ENCODE measurements at regions of chr1 and their contacts with region 1.

Region 1: GRCh38 chr1:66452162-66452561 is 81.8 kb upstream of the SGIP1 start:
- DNase-seq: no peak
- H3K4me3 ChIP-seq: no peak overlapping the region
- H3K27ac ChIP-seq: no peak overlapping the region
- H3K4me1 ChIP-seq: no peaks in the 10 kb centered on the region
- H3K27me3 ChIP-seq: no peaks in the 10 kb centered on the region
- CTCF ChIP-seq: no peak
- EP300 ChIP-seq: no peak
- POLR2A ChIP-seq: no peak
- RAD21 ChIP-seq: peak; percentile 2 to 15; a peak in 2 of 4 replicates

Region 2: DNA sequence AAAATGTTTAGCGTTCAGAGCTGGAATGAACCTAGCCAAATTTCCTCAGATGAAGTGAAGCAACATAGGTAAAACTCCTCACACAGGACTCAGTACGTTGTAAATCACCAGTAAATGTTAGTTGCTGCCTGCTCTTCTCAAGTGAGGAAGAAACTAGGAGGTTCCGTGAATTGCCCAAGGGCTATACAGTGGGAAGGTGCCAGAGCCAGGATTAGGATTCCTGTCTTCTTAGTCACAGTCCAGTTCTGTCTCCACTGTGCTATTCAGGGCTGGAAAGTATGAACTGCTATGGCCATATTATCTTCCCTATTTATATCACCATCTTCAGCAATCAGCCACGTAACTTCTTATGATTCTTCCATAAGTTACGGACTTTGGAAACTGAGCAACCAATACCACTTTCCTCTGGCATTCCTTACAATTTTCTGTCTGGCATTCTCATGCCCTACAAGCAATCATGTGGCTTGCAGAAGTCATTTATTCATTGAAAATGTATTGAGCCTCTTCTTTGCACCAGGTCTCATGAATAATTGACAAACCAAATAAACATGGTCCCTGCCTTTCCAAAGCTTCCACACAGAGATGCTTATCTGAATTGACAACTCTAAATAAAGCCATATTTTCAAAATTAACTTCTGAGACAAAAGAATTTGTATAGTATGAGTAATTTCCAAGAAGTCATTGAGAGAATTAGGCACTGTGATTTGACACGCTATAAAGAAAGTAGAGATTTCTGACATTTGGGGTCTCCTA is 189.8 kb before region 1 on chr1:
- CTCF ChIA-PET with region 1: interaction called, 273 read pairs
- POLR2A ChIA-PET with region 1: no interaction called
- DNase-seq: no peak
- H3K4me3 ChIP-seq: no peak overlapping the region
- H3K27ac ChIP-seq: no peak overlapping the region
- H3K4me1 ChIP-seq: peaks cover 0 to 3% (median under 1%) of the 10 kb centered on the region in 4 experiments; a peak in 2 of 7 replicates
- H3K27me3 ChIP-seq: no peaks in the 10 kb centered on the region
- CTCF ChIP-seq: no peak
- EP300 ChIP-seq: no peak
- POLR2A ChIP-seq: no peak
- RAD21 ChIP-seq: no peak

Region 3: GRCh38 chr1:66285618-66286270 is 166.4 kb before region 1 on chr1:
- CTCF ChIA-PET with region 1: no interaction called
- POLR2A ChIA-PET with region 1: no interaction called
- DNase-seq: no peak
- H3K4me3 ChIP-seq: no peak overlapping the region
- H3K27ac ChIP-seq: no peak overlapping the region
- H3K4me1 ChIP-seq: no peaks in the 10 kb centered on the region
- H3K27me3 ChIP-seq: no peaks in the 10 kb centered on the region
- CTCF ChIP-seq: no peak
- EP300 ChIP-seq: no peak
- POLR2A ChIP-seq: no peak
- RAD21 ChIP-seq: no peak

Region 4: DNA sequence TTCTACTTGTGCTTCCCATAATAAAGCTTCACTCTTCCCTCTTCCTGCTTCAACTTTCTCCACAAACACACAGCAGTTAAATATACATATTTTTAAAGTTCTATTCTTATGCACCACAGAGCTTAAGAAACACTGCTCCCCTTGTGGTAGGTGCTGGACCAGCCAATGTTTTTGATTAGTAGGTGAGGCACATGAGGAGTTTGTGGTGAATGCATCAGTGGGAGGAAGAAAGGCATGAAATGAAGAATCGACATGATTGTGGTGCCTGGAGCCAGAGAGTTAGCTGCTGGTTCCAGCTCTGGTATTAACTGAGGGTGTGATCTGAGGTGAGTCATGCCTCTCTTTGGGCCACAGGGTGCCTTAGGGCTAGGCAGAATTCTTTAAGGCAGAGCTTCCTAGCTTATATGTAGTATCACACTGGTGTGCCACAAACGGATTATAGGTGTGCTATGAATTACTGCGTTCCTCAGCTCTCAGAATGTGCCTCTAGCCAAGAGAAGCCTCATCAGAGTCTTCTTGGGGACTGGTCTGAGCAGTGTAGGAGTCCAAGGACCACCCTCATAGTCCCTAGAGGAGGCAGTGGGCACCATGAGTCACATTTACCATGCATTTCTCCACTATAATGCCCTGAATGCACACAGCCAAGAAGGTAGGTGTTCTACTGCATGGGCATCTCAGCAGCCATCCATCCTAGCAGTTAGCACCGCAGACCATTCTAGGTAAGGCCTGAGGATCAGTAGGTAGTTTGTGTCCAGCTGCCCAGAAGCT is 15.6 kb before region 1 on chr1:
- CTCF ChIA-PET with region 1: interaction called, 78 read pairs
- POLR2A ChIA-PET with region 1: no interaction called
- DNase-seq: no peak
- H3K4me3 ChIP-seq: no peak overlapping the region
- H3K27ac ChIP-seq: no peak overlapping the region; the same call in 1 of the 2 replicates
- H3K4me1 ChIP-seq: peaks cover 0 to 2% (median 0%) of the 10 kb centered on the region in 4 experiments; a peak in 1 of 7 replicates
- H3K27me3 ChIP-seq: no peaks in the 10 kb centered on the region
- CTCF ChIP-seq: peak in 2 of 3 experiments; percentile 2 to 44; a peak in 1 of 4 replicates
- EP300 ChIP-seq: no peak
- POLR2A ChIP-seq: no peak
- RAD21 ChIP-seq: 0 out of 4 replicates have a peak, but pooled peaks of 1 of the 2 experiments have one; percentile 16

Region 5: DNA sequence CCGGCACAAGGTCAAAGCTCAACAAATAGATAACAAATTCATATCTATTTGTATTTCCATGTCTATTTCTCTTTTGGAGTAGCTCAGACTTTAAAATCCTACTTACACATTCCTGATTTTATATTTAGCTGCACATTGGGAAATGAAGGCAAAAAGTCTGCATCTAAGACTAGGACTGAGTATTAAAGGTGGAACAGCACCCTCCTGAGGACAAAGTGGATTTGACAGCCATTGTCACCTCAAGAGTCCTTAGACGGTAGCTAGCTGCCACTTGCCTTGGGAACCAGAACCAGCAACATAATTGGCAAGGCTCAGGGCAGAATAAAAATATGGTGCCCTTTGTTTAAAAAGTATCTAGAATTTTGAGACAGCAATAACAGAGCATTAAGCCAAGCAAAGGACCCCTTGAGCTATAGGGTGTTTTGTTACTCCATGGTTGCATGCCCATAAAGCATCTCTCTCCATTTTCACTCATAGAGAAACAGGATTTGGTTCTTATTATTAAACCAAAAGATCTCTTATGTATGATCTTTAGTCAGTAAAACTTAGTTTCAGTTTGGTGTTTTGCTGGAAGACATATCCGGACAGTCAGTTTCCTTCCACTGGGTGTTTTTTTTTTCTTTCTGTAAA is 51.8 kb after region 1 on chr1:
- CTCF ChIA-PET with region 1: interaction called, 53 read pairs
- POLR2A ChIA-PET with region 1: no interaction called
- DNase-seq: peak; percentile 7 to 68
- H3K4me3 ChIP-seq: no peak overlapping the region
- H3K27ac ChIP-seq: no peak overlapping the region
- H3K4me1 ChIP-seq: no peaks in the 10 kb centered on the region
- H3K27me3 ChIP-seq: no peaks in the 10 kb centered on the region
- CTCF ChIP-seq: peak; percentile 50 to 86 (median 71)
- EP300 ChIP-seq: no peak
- POLR2A ChIP-seq: no peak
- RAD21 ChIP-seq: peak; percentile 81 to 90